ENCODE measurements at regions of chr3 and their contacts with region 1.

Region 1: GRCh38 chr3:69542221-69543079 is 156.6 kb upstream of the FRMD4B start:
- DNase-seq: peak; percentile 27
- H3K4me3 Mint-ChIP-seq: peak overlapping the region; percentile 78
- H3K27ac Mint-ChIP-seq: peak overlapping the region; percentile 87
- H3K4me1 Mint-ChIP-seq: peaks cover 16% of the 10 kb centered on the region
- H3K27me3 Mint-ChIP-seq: no peaks in the 10 kb centered on the region
- CTCF ChIP-seq: no peak

Region 2: GRCh38 chr3:69439643-69440270 is 102.7 kb before region 1 on chr3:
- CTCF ChIA-PET with region 1: interaction called, 4 read pairs
- POLR2A ChIA-PET with region 1: interaction called, 7 read pairs
- intact Hi-C with region 1: loop called (anchors 1 kb)
- DNase-seq: peak; percentile 35
- H3K4me3 Mint-ChIP-seq: no peak overlapping the region
- H3K27ac Mint-ChIP-seq: no peak overlapping the region
- H3K4me1 Mint-ChIP-seq: peaks cover 10% of the 10 kb centered on the region
- H3K27me3 Mint-ChIP-seq: no peaks in the 10 kb centered on the region
- CTCF ChIP-seq: peak; percentile 43

Region 3: GRCh38 chr3:69458803-69459365 is 83.6 kb before region 1 on chr3:
- CTCF ChIA-PET with region 1: interaction called, 5 read pairs
- POLR2A ChIA-PET with region 1: interaction called, 8 read pairs
- intact Hi-C with region 1: loop called (anchors 5 kb)
- DNase-seq: peak; percentile 43
- H3K4me3 Mint-ChIP-seq: no peak overlapping the region
- H3K27ac Mint-ChIP-seq: peak overlapping the region; percentile 4
- H3K4me1 Mint-ChIP-seq: peaks cover 25% of the 10 kb centered on the region
- H3K27me3 Mint-ChIP-seq: no peaks in the 10 kb centered on the region
- CTCF ChIP-seq: no peak

Region 4: GRCh38 chr3:69558912-69559311 is 16.5 kb after region 1 on chr3:
- CTCF ChIA-PET with region 1: interaction called, 3 read pairs
- POLR2A ChIA-PET with region 1: interaction called, 55 read pairs
- intact Hi-C with region 1: no loop called
- DNase-seq: peak; percentile 97
- H3K4me3 Mint-ChIP-seq: no peak overlapping the region
- H3K27ac Mint-ChIP-seq: no peak overlapping the region
- H3K4me1 Mint-ChIP-seq: peaks cover 19% of the 10 kb centered on the region
- H3K27me3 Mint-ChIP-seq: no peaks in the 10 kb centered on the region
- CTCF ChIP-seq: no peak

Region 5: DNA sequence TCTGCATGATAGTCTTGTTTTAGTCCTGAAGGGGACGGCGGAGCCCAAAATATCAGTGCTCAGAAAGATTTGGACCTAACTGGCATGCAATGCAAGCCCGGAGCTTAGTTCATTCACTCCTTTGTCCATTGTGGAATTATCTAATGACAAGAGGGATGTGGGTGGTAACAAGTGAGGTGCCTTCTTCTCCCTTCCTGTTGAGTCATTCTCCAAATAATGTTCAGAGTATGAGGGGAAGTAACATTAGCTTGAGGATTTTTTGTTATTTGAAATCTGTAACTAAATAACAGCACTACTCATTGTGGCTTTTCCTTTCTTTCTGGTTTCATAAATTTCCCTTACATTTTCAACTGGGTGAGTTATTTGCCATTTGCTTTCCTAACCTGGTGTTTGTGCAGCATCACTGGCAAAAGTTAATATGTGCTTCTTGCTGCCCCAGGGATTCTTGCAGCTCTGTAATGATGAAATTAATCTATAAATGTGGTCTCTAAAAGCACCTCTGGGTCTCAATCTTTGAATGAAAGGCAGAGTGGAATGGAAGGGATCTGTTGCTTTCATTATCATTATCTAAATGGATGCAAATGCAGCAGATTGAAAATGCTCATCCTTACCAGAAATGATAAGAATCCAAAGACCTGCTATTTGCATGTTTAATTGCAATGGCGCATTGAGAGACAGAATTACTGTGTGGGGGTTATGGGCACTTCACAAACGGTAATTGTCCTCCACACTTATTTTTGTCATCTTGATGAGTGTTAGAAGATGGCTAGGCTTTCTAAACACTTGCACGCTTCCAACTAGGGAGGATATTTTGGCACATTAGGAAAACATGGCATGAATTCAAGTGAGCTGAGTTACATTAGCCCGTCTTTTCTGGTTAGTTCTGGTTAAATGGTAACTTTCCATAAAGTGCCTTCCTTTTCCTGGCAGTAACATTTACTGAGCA is 106.9 kb after region 1 on chr3:
- CTCF ChIA-PET with region 1: interaction called, 4 read pairs
- POLR2A ChIA-PET with region 1: no interaction called
- intact Hi-C with region 1: loop called (anchors 5 kb)
- DNase-seq: peak; percentile 62
- H3K4me3 Mint-ChIP-seq: no peak overlapping the region
- H3K27ac Mint-ChIP-seq: no peak overlapping the region
- H3K4me1 Mint-ChIP-seq: peaks cover 25% of the 10 kb centered on the region
- H3K27me3 Mint-ChIP-seq: no peaks in the 10 kb centered on the region
- CTCF ChIP-seq: no peak

Region 6: GRCh38 chr3:69691860-69692259 is 149.4 kb after region 1 on chr3:
- CTCF ChIA-PET with region 1: no interaction called
- POLR2A ChIA-PET with region 1: no interaction called
- intact Hi-C with region 1: no loop called
- DNase-seq: no peak
- H3K4me3 Mint-ChIP-seq: no peak overlapping the region
- H3K27ac Mint-ChIP-seq: no peak overlapping the region
- H3K4me1 Mint-ChIP-seq: peaks cover 6% of the 10 kb centered on the region
- H3K27me3 Mint-ChIP-seq: no peaks in the 10 kb centered on the region
- CTCF ChIP-seq: no peak

Measured in MCF 10A (cell line).